Adrenal gland (tissue), 19 donors: ENCODE measurements at regions of chr10 and their contacts with region 1.

Region 1: DNA sequence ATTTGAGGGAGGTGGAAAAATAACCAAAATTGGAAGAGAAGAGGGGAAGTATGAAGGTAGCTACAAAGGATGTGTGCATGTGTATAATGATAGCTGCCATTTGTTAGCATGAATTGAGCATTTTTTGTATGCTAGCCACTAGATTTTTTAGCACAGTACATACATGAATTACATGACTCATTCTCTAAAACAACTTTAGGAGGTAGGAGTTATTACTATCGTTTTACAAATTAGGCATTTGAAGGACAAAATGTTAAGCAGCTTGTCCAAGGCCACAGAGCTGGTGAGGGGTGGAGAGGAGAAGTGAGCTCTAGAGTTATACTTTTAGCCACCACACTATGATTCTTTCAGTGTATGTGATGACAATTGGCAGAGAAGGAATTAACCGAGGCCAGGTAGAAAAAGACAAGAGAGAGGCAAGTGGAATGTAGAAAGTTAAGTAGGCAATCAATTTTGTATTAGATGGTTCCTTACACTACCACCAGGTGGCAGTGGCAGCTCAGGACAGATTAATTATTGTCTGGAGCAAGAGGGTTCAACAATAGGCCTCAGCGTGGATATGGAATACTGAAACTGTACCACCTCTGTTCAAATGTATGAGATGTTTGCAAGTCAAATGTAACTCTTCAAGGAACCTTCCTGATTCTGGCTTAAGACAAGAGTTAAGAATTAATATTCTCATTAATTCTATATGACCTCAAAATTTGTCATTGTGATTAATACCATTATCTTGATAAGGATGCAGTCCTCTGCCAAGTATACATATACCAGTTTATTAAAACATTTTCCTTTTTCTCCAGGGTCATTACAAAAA is 128.0 kb downstream of the MBL2 start:
- DNase-seq: peak; percentile 18 to 66 (median 37)
- H3K4me3 ChIP-seq: no peak overlapping the region
- H3K27ac ChIP-seq: no peak overlapping the region
- H3K4me1 ChIP-seq: no peaks in the 10 kb centered on the region
- H3K27me3 ChIP-seq: no peaks in the 10 kb centered on the region
- CTCF ChIP-seq: peak; percentile 50 to 72 (median 65)
- POLR2A ChIP-seq: no peak

Region 2: GRCh38 chr10:52566471-52567246 is 77.9 kb before region 1 on chr10:
- intact Hi-C with region 1: no loop called
- DNase-seq: no peak
- H3K4me3 ChIP-seq: no peak overlapping the region
- H3K27ac ChIP-seq: no peak overlapping the region
- H3K4me1 ChIP-seq: no peaks in the 10 kb centered on the region
- H3K27me3 ChIP-seq: no peaks in the 10 kb centered on the region
- CTCF ChIP-seq: peak in 4 of 6 experiments; percentile 23 to 44 (median 26)
- POLR2A ChIP-seq: no peak

Region 3: GRCh38 chr10:52729271-52730104 is 84.9 kb after region 1 on chr10:
- intact Hi-C with region 1: loop called in 1 of 2 experiments (anchors 10 kb)
- DNase-seq: no peak
- H3K4me3 ChIP-seq: no peak overlapping the region
- H3K27ac ChIP-seq: no peak overlapping the region
- H3K4me1 ChIP-seq: no peaks in the 10 kb centered on the region
- H3K27me3 ChIP-seq: no peaks in the 10 kb centered on the region
- CTCF ChIP-seq: peak; percentile 27 to 57 (median 41)
- POLR2A ChIP-seq: no peak